ENCODE measurements at regions of chr12 and their contacts with region 1.

Region 1: GRCh38 chr12:26434299-26435068 is 239.1 kb downstream of the SSPN start:
- DNase-seq: no peak
- ATAC-seq: peak; percentile 86
- H3K4me3 Mint-ChIP-seq: no peak overlapping the region
- H3K27ac Mint-ChIP-seq: no peak overlapping the region
- H3K4me1 Mint-ChIP-seq: no peaks in the 10 kb centered on the region
- H3K27me3 Mint-ChIP-seq: no peaks in the 10 kb centered on the region
- CTCF ChIP-seq: peak; percentile 74

Region 2: GRCh38 chr12:26044012-26044383 is 390.5 kb before region 1 on chr12:
- CTCF ChIA-PET with region 1: no interaction called
- POLR2A ChIA-PET with region 1: no interaction called
- intact Hi-C with region 1: no loop called
- DNase-seq: no peak
- ATAC-seq: no peak
- H3K4me3 Mint-ChIP-seq: no peak overlapping the region
- H3K27ac Mint-ChIP-seq: no peak overlapping the region
- H3K4me1 Mint-ChIP-seq: no peaks in the 10 kb centered on the region
- H3K27me3 Mint-ChIP-seq: peaks cover 3% of the 10 kb centered on the region
- CTCF ChIP-seq: no peak

Region 3: DNA sequence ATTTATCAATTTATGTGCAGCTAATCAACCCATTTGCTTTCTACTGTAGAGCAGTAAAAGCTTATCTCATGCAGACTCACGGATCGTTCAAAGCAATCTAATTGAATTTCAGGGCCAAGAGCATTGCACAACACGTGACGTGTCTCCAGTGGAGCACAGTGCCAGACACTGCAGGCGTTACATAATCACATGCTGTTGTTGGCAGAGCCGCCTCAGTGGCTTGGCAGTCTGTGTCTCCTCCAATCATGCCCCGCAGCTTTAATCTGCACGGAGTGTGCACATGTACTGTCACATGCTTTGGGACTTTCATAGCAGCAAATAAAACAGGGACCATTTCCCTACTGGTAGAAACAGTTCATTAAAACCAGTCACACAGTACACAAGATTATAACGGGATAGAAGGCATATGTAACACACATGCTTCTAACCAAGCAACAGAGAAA is 89.2 kb after region 1 on chr12:
- CTCF ChIA-PET with region 1: interaction called, 37 read pairs
- POLR2A ChIA-PET with region 1: no interaction called
- intact Hi-C with region 1: loop called (anchors 1 kb)
- DNase-seq: no peak
- ATAC-seq: no peak
- H3K4me3 Mint-ChIP-seq: no peak overlapping the region
- H3K27ac Mint-ChIP-seq: no peak overlapping the region
- H3K4me1 Mint-ChIP-seq: peaks cover 20% of the 10 kb centered on the region
- H3K27me3 Mint-ChIP-seq: no peaks in the 10 kb centered on the region
- CTCF ChIP-seq: no peak

Region 4: GRCh38 chr12:26535826-26536225 is 101.3 kb after region 1 on chr12:
- CTCF ChIA-PET with region 1: no interaction called
- POLR2A ChIA-PET with region 1: no interaction called
- intact Hi-C with region 1: no loop called
- DNase-seq: no peak
- ATAC-seq: no peak
- H3K4me3 Mint-ChIP-seq: no peak overlapping the region
- H3K27ac Mint-ChIP-seq: no peak overlapping the region
- H3K4me1 Mint-ChIP-seq: no peaks in the 10 kb centered on the region
- H3K27me3 Mint-ChIP-seq: no peaks in the 10 kb centered on the region
- CTCF ChIP-seq: no peak

Region 5: GRCh38 chr12:26614020-26614616 is 179.6 kb after region 1 on chr12:
- CTCF ChIA-PET with region 1: interaction called, 15 read pairs
- POLR2A ChIA-PET with region 1: no interaction called
- intact Hi-C with region 1: loop called (anchors 1 kb)
- DNase-seq: no peak
- ATAC-seq: peak; percentile 45
- H3K4me3 Mint-ChIP-seq: no peak overlapping the region
- H3K27ac Mint-ChIP-seq: no peak overlapping the region
- H3K4me1 Mint-ChIP-seq: no peaks in the 10 kb centered on the region
- H3K27me3 Mint-ChIP-seq: no peaks in the 10 kb centered on the region
- CTCF ChIP-seq: no peak

Region 6: GRCh38 chr12:26651566-26652188 is 217.2 kb after region 1 on chr12:
- CTCF ChIA-PET with region 1: interaction called, 3 read pairs
- POLR2A ChIA-PET with region 1: no interaction called
- intact Hi-C with region 1: loop called (anchors 1 kb)
- DNase-seq: no peak
- ATAC-seq: peak; percentile 62
- H3K4me3 Mint-ChIP-seq: no peak overlapping the region
- H3K27ac Mint-ChIP-seq: no peak overlapping the region
- H3K4me1 Mint-ChIP-seq: no peaks in the 10 kb centered on the region
- H3K27me3 Mint-ChIP-seq: no peaks in the 10 kb centered on the region
- CTCF ChIP-seq: no peak

Region 7: DNA sequence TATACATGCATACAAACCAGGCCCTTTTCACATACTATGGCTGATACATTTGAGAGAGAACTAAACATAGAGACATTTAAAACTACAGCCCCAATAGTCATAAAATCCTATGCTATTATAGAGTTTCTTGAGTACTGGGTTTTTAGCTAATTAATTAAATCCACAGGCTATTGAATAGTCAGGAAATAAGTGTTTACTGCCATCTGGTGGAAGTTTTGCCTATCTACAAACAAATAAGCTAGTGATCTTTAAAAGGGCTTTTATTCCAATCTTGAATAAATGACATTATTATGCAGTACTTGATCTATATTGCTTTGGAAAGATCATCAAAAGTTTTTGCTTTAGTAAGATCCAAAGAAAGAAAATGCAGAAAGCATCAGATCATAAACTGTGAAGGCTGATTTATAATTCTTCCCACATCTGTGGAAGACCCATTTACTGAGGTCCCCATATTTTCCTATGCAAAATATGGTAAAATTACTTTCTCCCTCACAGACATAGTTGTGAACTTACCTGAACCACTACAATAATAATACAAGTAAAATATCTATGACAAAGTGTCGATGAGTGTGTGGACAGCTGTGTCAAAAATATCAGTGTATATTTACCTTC is 267.2 kb after region 1 on chr12:
- CTCF ChIA-PET with region 1: no interaction called
- POLR2A ChIA-PET with region 1: no interaction called
- intact Hi-C with region 1: loop called (anchors 1 kb)
- DNase-seq: no peak
- ATAC-seq: no peak
- H3K4me3 Mint-ChIP-seq: no peak overlapping the region
- H3K27ac Mint-ChIP-seq: no peak overlapping the region
- H3K4me1 Mint-ChIP-seq: peaks cover 4% of the 10 kb centered on the region
- H3K27me3 Mint-ChIP-seq: no peaks in the 10 kb centered on the region
- CTCF ChIP-seq: peak; percentile 58